ENCODE measurements at regions of chr14 and their contacts with region 1.

Region 1: GRCh38 chr14:55416866-55417265 is 5.2 kb upstream of the ATG14 start:
- DNase-seq: no peak
- H3K4me3 ChIP-seq: no peak overlapping the region
- H3K27ac ChIP-seq: no peak overlapping the region
- H3K4me1 ChIP-seq: peaks cover 0 to 2% of the 10 kb centered on the region in 2 experiments; a peak in 2 of 4 replicates
- H3K27me3 ChIP-seq: no peaks in the 10 kb centered on the region; the same call in 1 of the 2 replicates
- CTCF ChIP-seq: peak; percentile 61
- EP300 ChIP-seq: no peak
- RAD21 ChIP-seq: peak; percentile 45

Region 2: GRCh38 chr14:55430024-55430690 is 13.3 kb after region 1 on chr14:
- CTCF ChIA-PET with region 1: interaction called, 25 read pairs
- POLR2A ChIA-PET with region 1: no interaction called
- DNase-seq: peak; percentile 59
- H3K4me3 ChIP-seq: no peak overlapping the region
- H3K27ac ChIP-seq: no peak overlapping the region
- H3K4me1 ChIP-seq: no peaks in the 10 kb centered on the region
- H3K27me3 ChIP-seq: no peaks in the 10 kb centered on the region; the same call in 1 of the 2 replicates
- CTCF ChIP-seq: peak; percentile 59
- EP300 ChIP-seq: no peak
- RAD21 ChIP-seq: peak; percentile 71

Measured in SK-N-SH (cell line).